Activated CD4-positive, alpha-beta T cell treated with anti-CD3 and anti-CD28 coated beads, Interleukin-2, amount 10 ng/mL, durations not matched to agents 24 days and 14 days (primary cell): ENCODE measurements at regions of chr9 and their contacts with region 1.

Region 1: GRCh38 chr9:104991144-104991953 is 63.4 kb upstream of the ABCA1 start:
- DNase-seq: peak; percentile 93
- H3K4me3 Mint-ChIP-seq: peak overlapping the region; percentile 88
- H3K27ac Mint-ChIP-seq: peak overlapping the region; percentile 82
- H3K4me1 Mint-ChIP-seq: peaks cover 29% of the 10 kb centered on the region
- H3K27me3 Mint-ChIP-seq: peaks cover 46% of the 10 kb centered on the region

Region 2: DNA sequence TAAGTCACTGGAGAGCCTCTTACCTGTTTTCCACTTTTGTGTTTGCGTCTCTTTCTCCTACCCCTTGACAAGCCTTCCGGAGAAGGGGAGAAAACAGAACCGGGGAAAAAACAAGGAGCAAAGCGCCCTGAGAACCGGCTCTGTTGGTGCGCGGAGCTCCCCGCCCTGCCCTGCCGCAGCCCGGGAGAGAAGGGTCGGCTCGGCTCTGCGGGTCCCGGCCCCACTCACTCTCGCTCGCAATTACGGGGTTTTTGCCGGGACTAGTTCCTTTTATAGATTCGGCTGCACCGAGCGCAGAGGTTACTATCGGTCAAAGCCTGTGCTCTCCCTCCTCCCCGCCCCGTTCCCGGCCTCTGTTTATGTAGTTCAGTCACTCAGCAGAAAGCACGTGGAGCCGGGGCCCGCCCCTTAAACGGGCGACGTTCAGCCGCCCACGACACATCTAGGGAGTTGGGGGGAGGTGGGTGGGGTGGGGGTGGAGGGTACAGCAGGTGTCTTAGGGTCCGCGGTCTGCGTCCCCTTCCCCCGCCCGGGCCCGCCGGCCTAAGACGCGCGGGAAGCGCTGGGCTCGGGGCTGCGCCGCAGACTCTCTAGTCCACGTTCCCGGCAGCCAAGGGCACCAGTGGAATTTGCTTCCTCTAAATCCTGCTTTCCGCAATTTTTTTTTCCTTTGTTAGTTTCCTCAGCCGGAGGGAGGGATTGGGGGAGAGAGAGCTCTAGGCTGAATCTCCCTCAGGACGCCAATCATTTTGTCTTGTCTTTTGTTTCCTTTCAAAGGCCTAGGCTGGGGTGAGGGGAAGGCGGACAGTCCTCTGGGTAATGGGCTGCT is 63.2 kb before region 1 on chr9 and contains the start of gene ABCA1:
- intact Hi-C with region 1: loop called (anchors 1 kb)
- DNase-seq: peak; percentile 89
- H3K4me3 Mint-ChIP-seq: peak within 1 kb of the TSS; percentile 89
- H3K27ac Mint-ChIP-seq: peak within 1 kb of the TSS; percentile 59
- H3K4me1 Mint-ChIP-seq: peaks cover 15% of the 10 kb centered on the region
- H3K27me3 Mint-ChIP-seq: peaks cover 36% of the 10 kb centered on the region
- total RNA-seq, gene ABCA1: 0.31 and 0.56 TPM in 2 replicates

Region 3: DNA sequence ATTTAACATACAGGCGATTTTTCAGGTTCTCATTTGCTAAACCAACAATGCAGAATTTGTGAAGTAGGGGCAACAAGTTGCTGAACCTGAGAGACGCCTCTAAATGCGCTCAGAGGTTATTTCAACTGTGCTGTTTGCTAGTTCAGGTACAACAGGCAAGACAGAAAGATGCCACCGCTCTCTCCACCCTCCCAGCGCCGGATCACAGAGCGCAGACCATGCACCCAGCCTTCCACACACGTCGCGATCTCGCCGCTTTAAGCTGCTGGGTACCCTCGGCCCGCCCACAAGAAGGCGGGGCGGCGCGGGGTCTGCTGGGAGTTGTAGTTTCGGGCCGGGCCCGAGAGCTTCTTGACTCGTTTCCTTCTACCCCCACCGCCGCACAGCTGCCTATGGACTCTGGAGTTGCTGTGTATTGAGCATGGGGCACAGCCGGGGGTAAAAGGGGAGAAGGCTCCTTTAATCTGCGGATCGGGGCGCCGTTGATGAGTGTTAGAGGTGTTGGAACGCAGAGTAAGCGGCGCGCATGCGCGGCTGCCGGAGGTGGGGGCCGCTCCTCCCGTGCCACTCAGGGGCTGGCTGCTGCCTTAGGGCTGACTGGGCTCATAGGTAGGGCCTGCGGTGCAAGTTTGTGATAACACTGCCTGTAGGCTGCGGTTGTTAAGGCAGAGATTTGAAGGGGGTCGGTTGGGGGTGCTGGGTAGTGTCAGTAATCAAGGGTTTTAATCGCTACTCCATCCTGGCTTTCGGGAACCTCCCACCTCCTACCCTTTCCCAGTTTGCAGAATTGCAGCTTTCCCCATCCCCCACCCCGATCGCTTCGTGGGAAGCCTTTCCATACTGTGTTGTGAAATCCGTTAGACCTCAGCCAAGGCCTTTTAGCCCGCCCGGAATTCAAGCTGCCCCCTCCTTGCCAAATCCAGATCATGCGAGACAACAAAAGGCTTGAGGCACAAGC is 23.0 kb before region 1 on chr9:
- intact Hi-C with region 1: loop called (anchors 1 kb)
- DNase-seq: peak; percentile 97
- H3K4me3 Mint-ChIP-seq: peak overlapping the region; percentile 96
- H3K27ac Mint-ChIP-seq: peak overlapping the region; percentile 72
- H3K4me1 Mint-ChIP-seq: peaks cover 8% of the 10 kb centered on the region
- H3K27me3 Mint-ChIP-seq: peaks cover 27% of the 10 kb centered on the region

Region 4: DNA sequence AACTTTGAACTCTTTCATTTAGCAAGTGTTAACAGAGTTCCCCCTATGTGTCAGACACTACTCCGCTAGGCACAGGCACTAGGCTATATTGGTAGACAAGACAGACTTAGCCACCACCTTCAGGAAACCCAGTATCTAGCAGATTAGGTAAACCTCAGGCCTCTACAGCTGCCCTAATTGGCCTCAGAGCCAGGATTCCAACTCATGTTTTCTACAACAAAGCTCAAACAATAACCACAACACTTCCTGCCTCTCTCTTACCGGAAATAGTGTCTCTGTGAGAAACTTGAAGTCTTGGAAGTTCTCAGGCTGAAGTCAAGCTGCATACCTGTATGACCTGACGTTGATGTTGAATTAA is 136.5 kb after region 1 on chr9:
- intact Hi-C with region 1: loop called (anchors 10 kb)
- DNase-seq: peak; percentile 92
- H3K4me3 Mint-ChIP-seq: peak overlapping the region; percentile 28
- H3K27ac Mint-ChIP-seq: peak overlapping the region; percentile 35
- H3K4me1 Mint-ChIP-seq: peaks cover 22% of the 10 kb centered on the region
- H3K27me3 Mint-ChIP-seq: peaks cover 20% of the 10 kb centered on the region

Region 5: DNA sequence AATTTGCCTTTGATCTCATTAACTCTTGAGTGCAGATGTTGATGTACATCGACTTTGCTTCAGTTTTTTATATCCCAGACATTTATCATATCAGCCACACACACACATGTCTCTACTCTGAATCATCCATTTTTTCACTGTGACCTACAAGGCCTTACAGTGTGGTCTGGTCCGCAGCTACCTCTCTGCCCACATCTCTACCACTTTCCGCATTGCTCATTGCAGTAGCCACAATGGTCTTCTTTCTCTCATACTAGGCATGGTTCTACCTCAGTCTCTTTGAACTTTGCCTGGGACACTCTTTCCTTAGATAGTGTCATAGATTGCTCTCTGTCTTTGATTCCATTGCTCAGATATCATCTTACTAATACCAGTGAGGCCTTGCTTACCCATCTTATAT is 368.5 kb after region 1 on chr9:
- intact Hi-C with region 1: loop called (anchors 1 kb)
- DNase-seq: peak; percentile 70
- H3K4me3 Mint-ChIP-seq: no peak overlapping the region
- H3K27ac Mint-ChIP-seq: peak overlapping the region; percentile 25
- H3K4me1 Mint-ChIP-seq: peaks cover 19% of the 10 kb centered on the region
- H3K27me3 Mint-ChIP-seq: peaks cover 7% of the 10 kb centered on the region

Region 6: GRCh38 chr9:105500108-105500766 is 508.9 kb after region 1 on chr9:
- intact Hi-C with region 1: no loop called
- DNase-seq: no peak
- H3K4me3 Mint-ChIP-seq: no peak overlapping the region
- H3K27ac Mint-ChIP-seq: no peak overlapping the region
- H3K4me1 Mint-ChIP-seq: peaks cover 3% of the 10 kb centered on the region
- H3K27me3 Mint-ChIP-seq: no peaks in the 10 kb centered on the region